Right ventricle myocardium inferior (tissue), 1 donor: ENCODE measurements at regions of chr18 and their contacts with region 1.

Region 1: GRCh38 chr18:24118750-24119577 is 19.9 kb upstream of the CABYR start:
- DNase-seq: no peak
- ATAC-seq: peak; percentile 60

Region 2: DNA sequence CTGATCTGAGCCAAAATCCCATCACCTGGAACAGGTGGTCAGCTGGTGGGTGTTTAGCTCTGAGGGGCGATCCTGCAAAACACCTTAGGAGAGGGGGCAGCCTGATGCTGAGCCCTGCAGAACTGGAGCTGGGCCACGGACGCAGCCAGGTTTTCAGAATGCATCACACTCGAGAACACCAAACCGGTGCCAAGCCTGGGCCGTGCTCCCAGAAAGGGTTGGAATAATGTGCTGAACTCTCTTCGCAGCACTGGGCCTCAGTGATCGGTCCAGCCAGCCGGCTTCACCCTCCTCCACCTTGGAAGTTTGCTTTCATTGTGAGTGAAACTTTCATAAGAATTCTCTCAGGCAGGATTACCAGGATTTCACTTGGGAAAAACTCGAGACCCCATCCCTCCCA is 160.9 kb before region 1 on chr18:
- intact Hi-C with region 1: loop called (anchors 5 kb)
- DNase-seq: peak; percentile 91
- ATAC-seq: peak; percentile 94

Region 3: DNA sequence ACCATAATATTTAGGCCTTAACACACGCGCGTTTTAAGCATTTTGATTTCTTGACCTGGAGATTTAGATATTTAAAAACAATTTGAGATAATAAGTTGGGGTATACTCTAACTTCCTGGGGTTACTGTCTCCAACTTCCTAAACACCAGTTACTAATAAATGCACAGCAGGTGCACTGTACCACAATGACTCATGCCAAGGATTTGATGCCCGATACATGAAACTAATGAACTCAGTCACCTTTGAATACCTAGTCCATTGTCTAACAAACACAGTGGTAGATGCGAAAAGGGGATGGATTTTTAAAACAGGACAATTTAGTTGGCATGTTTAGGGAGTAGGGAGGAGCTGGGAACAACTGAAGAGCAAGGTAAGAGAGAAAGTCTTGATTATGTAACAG is 41.1 kb after region 1 on chr18:
- intact Hi-C with region 1: no loop called
- DNase-seq: no peak
- ATAC-seq: no peak